ENCODE measurements at regions of chr12 and their contacts with region 1.

Region 1: GRCh38 chr12:75666939-75667334 is 155.5 kb upstream of the KRR1 start:
- DNase-seq: peak; percentile 75
- ATAC-seq: peak; percentile 77
- H3K4me3 ChIP-seq: peak overlapping the region; percentile 15 to 57 (median 50); a peak in 3 of 6 replicates
- H3K27ac ChIP-seq: peak overlapping the region; percentile 99
- H3K4me1 ChIP-seq: peaks cover 44% of the 10 kb centered on the region
- H3K27me3 ChIP-seq: no peaks in the 10 kb centered on the region
- CTCF ChIP-seq: no peak
- EP300 ChIP-seq: 0 out of 4 replicates have a peak, but pooled peaks of 1 of the 2 experiments have one; percentile 10
- POLR2A ChIP-seq: no peak
- RAD21 ChIP-seq: no peak

Region 2: GRCh38 chr12:75591628-75592027 is 75.3 kb before region 1 on chr12:
- CTCF ChIA-PET with region 1: no interaction called
- POLR2A ChIA-PET with region 1: no interaction called
- in situ Hi-C with region 1: no loop called
- intact Hi-C with region 1: no loop called
- DNase-seq: no peak
- ATAC-seq: no peak
- H3K4me3 ChIP-seq: no peak overlapping the region
- H3K27ac ChIP-seq: no peak overlapping the region
- H3K4me1 ChIP-seq: peaks cover 17% of the 10 kb centered on the region
- H3K27me3 ChIP-seq: no peaks in the 10 kb centered on the region
- CTCF ChIP-seq: no peak
- EP300 ChIP-seq: no peak
- POLR2A ChIP-seq: no peak
- RAD21 ChIP-seq: no peak

Region 3: GRCh38 chr12:75623631-75624118 is 43.3 kb before region 1 on chr12:
- CTCF ChIA-PET with region 1: no interaction called
- POLR2A ChIA-PET with region 1: interaction called, 15 read pairs
- in situ Hi-C with region 1: no loop called
- intact Hi-C with region 1: loop called (anchors 5 kb)
- DNase-seq: peak; percentile 87
- ATAC-seq: peak; percentile 99
- H3K4me3 ChIP-seq: no peak overlapping the region; a peak in 1 of 6 replicates
- H3K27ac ChIP-seq: no peak overlapping the region
- H3K4me1 ChIP-seq: peaks cover 40% of the 10 kb centered on the region
- H3K27me3 ChIP-seq: no peaks in the 10 kb centered on the region
- CTCF ChIP-seq: peak; percentile 82
- EP300 ChIP-seq: peak in 1 of 2 experiments; percentile 91; a peak in 2 of 4 replicates
- POLR2A ChIP-seq: no peak
- RAD21 ChIP-seq: peak; percentile 87

Region 4: DNA sequence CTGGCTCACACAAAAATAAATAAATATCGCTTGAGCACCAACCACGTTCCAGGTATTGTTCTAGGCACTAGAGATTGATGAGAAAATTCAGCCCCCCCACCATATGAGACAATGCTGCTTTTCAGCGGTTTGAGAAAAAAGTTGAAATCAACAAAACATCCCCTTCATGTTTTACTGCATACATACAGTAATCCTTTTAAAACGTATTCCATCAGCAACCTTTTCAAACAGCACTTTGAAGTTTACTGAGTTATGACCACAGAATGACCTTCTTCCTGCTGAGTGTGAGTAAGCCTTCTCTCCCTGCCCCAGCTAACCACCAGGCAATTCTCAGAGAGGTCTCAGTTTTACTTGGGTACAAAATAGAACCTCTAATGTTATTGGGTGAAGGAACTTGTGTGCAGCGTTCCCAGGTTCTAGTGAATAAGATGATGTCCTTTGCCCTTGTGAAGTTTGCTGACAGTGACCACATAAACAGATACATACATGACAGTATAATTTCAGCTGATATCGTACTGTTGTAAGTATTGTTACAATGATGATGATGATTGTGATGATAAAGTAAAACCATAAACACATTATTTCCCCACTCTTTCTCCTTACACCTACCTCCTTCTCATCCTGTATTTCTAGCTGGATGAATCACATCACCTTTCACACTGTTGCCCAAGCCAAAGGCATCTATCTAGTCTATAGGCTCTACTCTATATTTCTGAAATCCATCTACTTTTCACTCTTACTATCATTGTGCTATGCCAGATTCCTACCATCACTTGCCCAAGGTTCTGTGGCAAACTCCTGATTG is 31.1 kb before region 1 on chr12:
- CTCF ChIA-PET with region 1: no interaction called
- POLR2A ChIA-PET with region 1: interaction called, 9 read pairs
- in situ Hi-C with region 1: no loop called
- intact Hi-C with region 1: loop called (anchors 1 kb)
- DNase-seq: peak; percentile 97
- ATAC-seq: peak; percentile 98
- H3K4me3 ChIP-seq: no peak overlapping the region
- H3K27ac ChIP-seq: peak overlapping the region; percentile 66
- H3K4me1 ChIP-seq: peaks cover 56% of the 10 kb centered on the region
- H3K27me3 ChIP-seq: no peaks in the 10 kb centered on the region
- CTCF ChIP-seq: no peak
- EP300 ChIP-seq: peak; percentile 80 to 98
- POLR2A ChIP-seq: no peak
- RAD21 ChIP-seq: no peak

Region 5: DNA sequence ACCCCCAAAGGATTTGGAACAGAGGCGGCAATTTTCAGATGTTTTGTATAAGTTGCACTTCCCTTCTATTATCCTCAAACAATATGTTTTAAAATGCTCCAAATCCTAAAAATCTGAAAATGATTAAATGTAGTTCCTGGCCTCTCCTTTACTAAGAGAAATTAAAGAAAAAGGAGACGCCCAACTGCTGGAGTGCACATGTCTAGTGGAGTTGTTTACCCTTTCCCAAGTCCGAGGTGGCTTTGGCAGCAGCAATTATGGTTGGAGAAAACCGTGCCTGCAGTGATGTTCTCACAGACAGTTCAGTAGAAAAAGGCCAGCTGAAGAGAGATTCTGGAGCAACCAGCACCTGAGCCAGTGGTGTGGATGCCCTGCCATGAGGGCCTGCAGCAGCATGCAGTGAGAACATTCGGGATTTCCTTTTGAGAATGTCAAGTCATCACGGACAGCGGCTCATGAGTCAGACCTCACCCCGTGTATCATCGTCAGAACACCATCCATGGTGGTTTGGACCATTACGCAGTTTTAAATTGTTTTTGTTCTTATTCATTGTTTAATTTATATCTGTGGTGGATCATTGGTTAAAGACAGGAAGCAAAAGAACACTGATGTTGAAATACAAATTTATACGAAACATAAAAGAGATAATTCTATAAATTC is 23.5 kb after region 1 on chr12:
- CTCF ChIA-PET with region 1: no interaction called
- POLR2A ChIA-PET with region 1: no interaction called
- in situ Hi-C with region 1: no loop called
- intact Hi-C with region 1: no loop called
- DNase-seq: no peak
- ATAC-seq: no peak
- H3K4me3 ChIP-seq: no peak overlapping the region
- H3K27ac ChIP-seq: no peak overlapping the region
- H3K4me1 ChIP-seq: peaks cover 6% of the 10 kb centered on the region
- H3K27me3 ChIP-seq: no peaks in the 10 kb centered on the region
- CTCF ChIP-seq: no peak
- EP300 ChIP-seq: no peak
- POLR2A ChIP-seq: no peak
- RAD21 ChIP-seq: no peak

Region 6: DNA sequence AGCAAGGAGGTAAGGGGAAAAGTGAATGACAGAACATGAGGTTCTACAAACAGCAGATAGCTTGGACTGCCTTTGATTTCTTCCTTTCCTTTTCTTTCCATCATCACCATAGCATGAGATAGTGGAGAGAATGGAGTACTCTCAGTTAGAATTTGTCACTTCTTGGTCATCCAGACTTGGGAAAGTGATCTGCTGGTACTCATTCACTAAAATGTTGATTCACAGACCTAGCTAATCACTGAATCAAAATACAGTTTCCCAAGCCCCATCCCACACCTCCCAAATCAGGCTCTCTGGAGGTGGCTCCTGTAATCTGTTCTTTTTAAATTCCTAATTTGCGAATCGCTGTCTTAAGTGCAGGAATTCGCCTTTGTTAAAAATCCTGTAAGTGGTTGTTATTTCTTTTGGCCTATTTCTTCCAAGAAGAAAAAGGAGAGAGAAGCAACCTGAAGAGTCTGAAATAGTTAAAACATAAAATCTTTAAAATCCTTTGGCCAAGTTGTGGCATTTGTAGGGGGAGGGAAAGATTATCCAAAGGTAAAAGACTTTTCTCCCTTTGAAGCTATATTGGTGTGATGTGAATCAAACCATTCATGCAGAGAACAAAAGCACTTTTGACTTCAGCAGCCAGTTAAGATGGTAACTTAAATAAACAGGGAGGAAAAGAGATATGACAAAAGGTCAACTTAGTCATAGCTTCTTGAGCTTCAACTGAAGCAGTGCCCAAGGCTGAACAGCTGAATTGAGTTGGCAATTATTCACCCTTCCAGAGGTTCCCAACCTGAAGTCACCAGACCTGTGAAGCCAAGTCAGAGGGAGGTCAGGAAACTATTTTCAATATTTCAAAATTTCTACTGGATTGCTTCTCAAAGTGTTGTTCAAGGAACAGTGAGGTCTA is 99.6 kb after region 1 on chr12:
- CTCF ChIA-PET with region 1: no interaction called
- POLR2A ChIA-PET with region 1: interaction called, 18 read pairs
- in situ Hi-C with region 1: no loop called
- intact Hi-C with region 1: loop called (anchors 1 kb)
- DNase-seq: peak; percentile 97
- ATAC-seq: peak; percentile 92
- H3K4me3 ChIP-seq: peak overlapping the region in 1 of 3 experiments; percentile 3; a peak in 1 of 6 replicates
- H3K27ac ChIP-seq: peak overlapping the region; percentile 86
- H3K4me1 ChIP-seq: peaks cover 57% of the 10 kb centered on the region
- H3K27me3 ChIP-seq: no peaks in the 10 kb centered on the region
- CTCF ChIP-seq: no peak
- EP300 ChIP-seq: peak in 1 of 2 experiments; percentile 98; a peak in 2 of 4 replicates
- POLR2A ChIP-seq: no peak
- RAD21 ChIP-seq: peak; percentile 30; the same call in 1 of the 2 replicates

Region 7: DNA sequence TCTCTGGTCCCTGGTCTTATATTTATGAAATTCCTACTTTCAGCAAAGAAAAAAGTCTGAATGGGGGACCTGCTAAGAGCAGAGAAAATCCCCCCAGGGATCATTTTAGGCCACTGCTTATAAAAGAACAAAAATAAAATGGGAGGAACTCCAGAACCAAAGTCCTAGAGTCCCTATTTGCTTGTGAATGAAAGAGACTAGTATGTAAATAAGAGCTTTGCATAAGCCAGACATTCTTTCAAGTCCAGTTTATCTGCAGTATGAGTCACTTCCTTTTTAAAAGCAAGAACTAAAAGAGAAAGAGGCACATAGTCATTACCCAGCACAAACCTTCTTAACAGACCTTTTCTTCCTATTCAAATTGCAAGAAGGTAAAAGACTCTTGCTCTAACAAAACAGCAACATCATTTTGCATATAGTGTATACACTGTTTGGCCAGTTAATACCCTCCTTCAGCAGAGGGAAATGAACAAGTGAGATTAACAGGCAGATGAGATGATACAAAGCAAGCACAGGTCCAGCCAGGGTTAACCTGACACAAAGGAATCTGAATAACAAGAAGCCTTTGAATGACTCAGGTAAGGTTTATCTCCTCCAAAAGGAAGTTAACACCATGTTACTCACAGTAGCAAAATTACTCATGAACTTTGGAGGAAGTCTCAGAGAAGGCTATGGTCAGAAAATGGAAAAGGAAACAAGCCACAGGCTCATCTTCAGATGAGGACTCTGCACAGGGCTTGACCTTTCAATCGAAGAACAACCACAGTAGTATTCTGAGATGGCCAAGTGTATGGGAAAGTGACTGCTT is 277.4 kb after region 1 on chr12:
- CTCF ChIA-PET with region 1: no interaction called
- POLR2A ChIA-PET with region 1: interaction called, 7 read pairs
- in situ Hi-C with region 1: no loop called
- intact Hi-C with region 1: loop called (anchors 1 kb)
- DNase-seq: peak; percentile 97
- ATAC-seq: peak; percentile 96
- H3K4me3 ChIP-seq: peak overlapping the region in 2 of 3 experiments; percentile 1 to 32; a peak in 2 of 6 replicates
- H3K27ac ChIP-seq: peak overlapping the region; percentile 96
- H3K4me1 ChIP-seq: peaks cover 54% of the 10 kb centered on the region
- H3K27me3 ChIP-seq: no peaks in the 10 kb centered on the region
- CTCF ChIP-seq: no peak
- EP300 ChIP-seq: peak; percentile 97 to 99
- POLR2A ChIP-seq: no peak; a peak in 1 of 4 replicates
- RAD21 ChIP-seq: no peak

Region 8: GRCh38 chr12:75994186-75994731 is 327.3 kb after region 1 on chr12:
- CTCF ChIA-PET with region 1: no interaction called
- POLR2A ChIA-PET with region 1: interaction called, 13 read pairs
- in situ Hi-C with region 1: no loop called
- intact Hi-C with region 1: no loop called
- DNase-seq: no peak
- ATAC-seq: no peak
- H3K4me3 ChIP-seq: no peak overlapping the region
- H3K27ac ChIP-seq: no peak overlapping the region
- H3K4me1 ChIP-seq: peaks cover 44% of the 10 kb centered on the region
- H3K27me3 ChIP-seq: no peaks in the 10 kb centered on the region
- CTCF ChIP-seq: no peak
- EP300 ChIP-seq: no peak
- POLR2A ChIP-seq: no peak
- RAD21 ChIP-seq: no peak

Measured in HepG2 (cell line).